ENCODE measurements at regions of chr16 and their contacts with region 1.

Region 1: GRCh38 chr16:58345574-58346354 is 46.5 kb upstream of the GINS3 start:
- DNase-seq: no peak
- ATAC-seq: no peak
- H3K4me3 ChIP-seq: no peak overlapping the region
- H3K27ac ChIP-seq: no peak overlapping the region
- H3K4me1 ChIP-seq: no peaks in the 10 kb centered on the region
- H3K27me3 ChIP-seq: peaks cover 0 to 11% of the 10 kb centered on the region in 2 donors
- CTCF ChIP-seq: no peak

Region 2: DNA sequence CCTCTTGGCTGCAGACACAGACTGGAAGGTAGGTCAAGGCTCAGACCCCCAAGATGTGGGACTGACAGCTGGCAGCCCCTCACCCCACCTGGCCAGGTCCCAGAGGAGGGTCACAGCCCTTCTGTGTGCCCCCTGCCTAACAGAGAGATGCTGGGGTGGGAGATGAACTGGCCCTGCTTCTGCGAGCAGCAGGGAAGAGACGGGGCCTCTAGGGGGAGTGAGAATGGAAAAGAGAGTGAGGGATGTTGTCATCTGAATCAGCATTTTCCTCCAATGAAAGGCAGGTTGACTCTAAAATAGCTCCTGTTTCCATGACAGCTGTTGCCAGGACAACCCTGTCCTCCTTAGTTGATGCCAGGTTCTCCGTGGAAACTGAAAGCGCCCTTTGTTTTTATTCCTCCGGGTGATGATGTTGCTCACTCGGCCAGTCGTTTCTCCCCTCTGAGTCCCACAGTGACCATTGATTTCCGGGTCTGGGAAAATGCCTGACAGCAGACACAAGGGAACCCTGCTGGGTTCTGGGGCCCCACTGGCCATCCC is 149.3 kb after region 1 on chr16:
- intact Hi-C with region 1: loop called in 1 of 2 experiments (anchors 5 kb)
- DNase-seq: peak in 2 of 4 donors; percentile 46 to 86
- ATAC-seq: peak; percentile 51
- H3K4me3 ChIP-seq: no peak overlapping the region
- H3K27ac ChIP-seq: no peak overlapping the region
- H3K4me1 ChIP-seq: peaks cover 0 to 1% of the 10 kb centered on the region in 2 donors
- H3K27me3 ChIP-seq: peaks cover 0 to 20% of the 10 kb centered on the region in 2 donors
- CTCF ChIP-seq: no peak

Region 3: DNA sequence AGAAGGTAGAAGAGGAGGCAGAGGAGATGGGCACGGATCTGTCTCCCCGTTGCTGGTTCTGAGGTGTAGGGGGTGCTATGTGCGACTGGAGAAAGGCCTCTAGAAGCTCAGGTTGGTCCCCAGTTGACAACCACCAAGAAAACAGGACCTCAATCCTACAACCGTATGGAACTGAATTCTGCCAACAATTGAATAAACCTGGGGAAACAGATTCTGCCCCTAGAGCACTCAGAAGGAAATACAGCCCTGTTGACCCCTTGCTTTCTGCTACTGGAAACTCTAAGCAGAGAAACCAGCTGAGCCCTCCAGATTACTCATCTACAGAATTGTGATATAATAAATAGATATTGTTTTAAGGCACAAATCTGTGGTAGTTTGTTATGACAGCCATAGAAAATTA is 701.4 kb after region 1 on chr16:
- intact Hi-C with region 1: no loop called
- DNase-seq: no peak
- ATAC-seq: no peak
- H3K4me3 ChIP-seq: no peak overlapping the region
- H3K27ac ChIP-seq: no peak overlapping the region
- H3K4me1 ChIP-seq: peaks cover 0 to 7% of the 10 kb centered on the region in 2 donors
- H3K27me3 ChIP-seq: no peaks in the 10 kb centered on the region
- CTCF ChIP-seq: peak in 1 of 2 donors; percentile 23

Measured in left lung (tissue), 14 donors.